MCF 10A (cell line): ENCODE measurements at regions of chr2 and their contacts with region 1.

Region 1: GRCh38 chr2:200703127-200703925 is 108.4 kb upstream of the BZW1 start:
- DNase-seq: peak; percentile 77
- H3K4me3 Mint-ChIP-seq: no peak overlapping the region
- H3K27ac Mint-ChIP-seq: no peak overlapping the region
- H3K4me1 Mint-ChIP-seq: peaks cover 2% of the 10 kb centered on the region
- H3K27me3 Mint-ChIP-seq: no peaks in the 10 kb centered on the region
- CTCF ChIP-seq: peak; percentile 66

Region 2: GRCh38 chr2:199979832-199980628 is 723.3 kb before region 1 on chr2:
- CTCF ChIA-PET with region 1: interaction called, 4 read pairs
- POLR2A ChIA-PET with region 1: no interaction called
- intact Hi-C with region 1: loop called (anchors 1 kb)
- DNase-seq: peak; percentile 82
- H3K4me3 Mint-ChIP-seq: no peak overlapping the region
- H3K27ac Mint-ChIP-seq: peak overlapping the region; percentile 59
- H3K4me1 Mint-ChIP-seq: peaks cover 29% of the 10 kb centered on the region
- H3K27me3 Mint-ChIP-seq: no peaks in the 10 kb centered on the region
- CTCF ChIP-seq: peak; percentile 78

Region 3: GRCh38 chr2:200578778-200579177 is 124.5 kb before region 1 on chr2:
- CTCF ChIA-PET with region 1: interaction called, 50 read pairs
- POLR2A ChIA-PET with region 1: interaction called, 9 read pairs
- intact Hi-C with region 1: loop called (anchors 1 kb)
- DNase-seq: peak; percentile 49
- H3K4me3 Mint-ChIP-seq: no peak overlapping the region
- H3K27ac Mint-ChIP-seq: peak overlapping the region; percentile 49
- H3K4me1 Mint-ChIP-seq: no peaks in the 10 kb centered on the region
- H3K27me3 Mint-ChIP-seq: no peaks in the 10 kb centered on the region
- CTCF ChIP-seq: peak; percentile 32

Region 4: DNA sequence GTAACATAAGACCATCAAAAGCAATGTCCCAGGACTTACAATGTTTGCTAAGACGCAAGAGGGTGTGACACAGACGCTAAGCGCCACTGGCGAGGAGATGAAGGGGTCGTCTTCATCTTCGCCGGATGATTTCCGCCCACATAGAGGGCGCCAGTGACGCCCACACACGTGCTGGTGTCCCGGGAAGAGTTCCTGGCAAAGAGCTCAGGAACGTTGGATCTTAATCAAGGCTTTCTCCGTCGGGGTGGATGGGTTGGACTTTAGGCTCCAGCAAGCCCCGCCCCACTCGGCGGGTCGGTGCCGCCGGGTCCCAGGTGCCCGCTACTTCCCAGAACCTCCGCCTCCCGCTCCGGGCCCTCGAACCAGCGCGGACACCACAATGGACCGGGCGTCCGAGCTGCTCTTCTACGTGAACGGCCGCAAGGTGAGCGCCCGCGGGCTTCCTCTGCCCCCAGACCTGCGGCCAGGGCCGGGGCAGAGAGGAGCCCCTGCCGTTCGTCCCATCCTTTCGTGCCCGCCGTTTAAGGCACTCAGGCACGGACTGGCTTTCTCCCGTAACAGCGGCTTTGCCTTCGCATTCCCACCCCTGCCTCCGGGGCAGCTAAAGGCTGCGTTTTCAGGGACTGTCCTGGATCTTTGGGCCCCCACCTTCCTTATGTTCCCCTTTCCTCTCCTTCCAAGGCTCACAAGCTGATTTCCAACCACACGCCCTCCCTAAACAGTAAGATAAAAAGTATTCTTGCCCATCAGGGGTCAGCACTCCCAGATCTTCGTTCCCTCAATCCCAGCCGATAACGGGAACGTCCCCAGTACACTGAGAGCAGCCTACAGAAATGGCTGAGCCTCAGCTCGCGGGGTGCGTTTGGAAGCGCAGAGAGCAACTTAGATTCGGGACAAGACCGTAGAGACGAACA is 117.3 kb before region 1 on chr2 and contains the start of gene AOX1:
- CTCF ChIA-PET with region 1: interaction called, 43 read pairs
- POLR2A ChIA-PET with region 1: interaction called, 3 read pairs
- intact Hi-C with region 1: no loop called
- DNase-seq: no peak
- H3K4me3 Mint-ChIP-seq: no peak within 1 kb of the TSS
- H3K27ac Mint-ChIP-seq: no peak within 1 kb of the TSS
- H3K4me1 Mint-ChIP-seq: peaks cover 11% of the 10 kb centered on the region
- H3K27me3 Mint-ChIP-seq: no peaks in the 10 kb centered on the region
- CTCF ChIP-seq: no peak
- total RNA-seq, gene AOX1: 54.0 and 76.6 TPM in 2 replicates

Region 5: DNA sequence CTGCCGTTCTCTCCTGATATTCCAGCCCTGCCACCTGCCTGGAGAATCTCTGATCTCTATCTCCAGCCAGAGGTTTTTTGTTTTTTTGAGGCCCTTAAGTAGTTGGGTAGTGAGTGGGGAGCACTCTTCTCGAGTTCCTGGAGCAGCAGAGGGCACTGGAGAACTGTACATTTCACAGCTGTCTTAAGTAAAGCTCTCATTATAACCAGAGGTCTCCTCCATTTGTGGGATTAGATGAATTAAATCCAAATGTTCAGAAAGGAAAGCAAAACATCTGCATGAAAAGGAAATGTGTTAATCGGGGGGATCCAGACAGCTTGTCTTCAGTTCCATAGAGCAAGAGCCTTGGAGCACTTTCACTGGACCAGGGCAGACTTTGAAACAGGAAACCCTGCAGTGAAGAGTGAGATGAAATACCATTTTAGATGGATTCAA is 84.7 kb before region 1 on chr2:
- CTCF ChIA-PET with region 1: interaction called, 31 read pairs
- POLR2A ChIA-PET with region 1: interaction called, 11 read pairs
- intact Hi-C with region 1: loop called (anchors 1 kb)
- DNase-seq: peak; percentile 58
- H3K4me3 Mint-ChIP-seq: no peak overlapping the region
- H3K27ac Mint-ChIP-seq: peak overlapping the region; percentile 47
- H3K4me1 Mint-ChIP-seq: peaks cover 38% of the 10 kb centered on the region
- H3K27me3 Mint-ChIP-seq: no peaks in the 10 kb centered on the region
- CTCF ChIP-seq: no peak

Region 6: GRCh38 chr2:200839513-200839912 is 136.2 kb after region 1 on chr2:
- CTCF ChIA-PET with region 1: no interaction called
- POLR2A ChIA-PET with region 1: no interaction called
- intact Hi-C with region 1: no loop called
- DNase-seq: peak; percentile 26
- H3K4me3 Mint-ChIP-seq: no peak overlapping the region
- H3K27ac Mint-ChIP-seq: no peak overlapping the region
- H3K4me1 Mint-ChIP-seq: no peaks in the 10 kb centered on the region
- H3K27me3 Mint-ChIP-seq: no peaks in the 10 kb centered on the region
- CTCF ChIP-seq: no peak

Region 7: DNA sequence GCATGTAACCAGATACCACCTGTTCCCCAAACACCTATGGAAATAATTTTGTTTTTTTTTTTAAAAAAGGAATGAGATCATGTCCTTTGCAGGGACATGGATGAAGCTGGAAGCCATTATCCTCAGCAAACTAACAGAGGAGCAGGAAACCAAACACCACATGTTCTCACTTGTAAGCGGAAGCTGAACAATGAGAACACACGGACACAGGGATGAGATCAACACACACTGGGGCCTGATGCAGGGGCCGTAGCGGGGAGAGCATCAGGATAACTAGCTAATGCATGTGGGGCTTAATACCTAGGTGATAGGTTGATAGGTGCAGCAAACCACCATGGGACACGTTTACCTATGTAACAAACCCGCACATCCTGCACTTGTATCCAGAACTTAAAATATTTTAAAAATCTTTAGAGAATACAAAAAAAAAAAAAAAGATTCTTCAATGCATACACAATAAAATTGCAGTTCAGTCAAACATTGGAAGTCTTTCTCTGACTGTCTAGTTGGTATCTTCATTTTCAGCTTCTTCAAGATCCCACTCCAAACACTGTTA is 468.0 kb after region 1 on chr2:
- CTCF ChIA-PET with region 1: no interaction called
- POLR2A ChIA-PET with region 1: no interaction called
- intact Hi-C with region 1: loop called (anchors 10 kb)
- DNase-seq: no peak
- H3K4me3 Mint-ChIP-seq: no peak overlapping the region
- H3K27ac Mint-ChIP-seq: no peak overlapping the region
- H3K4me1 Mint-ChIP-seq: no peaks in the 10 kb centered on the region
- H3K27me3 Mint-ChIP-seq: no peaks in the 10 kb centered on the region
- CTCF ChIP-seq: no peak